Activated CD4-positive, alpha-beta T cell treated with anti-CD3 and anti-CD28 coated beads for 36 hours (primary cell): ENCODE measurements at regions of chr14 and their contacts with region 1.

Region 1: GRCh38 chr14:67359775-67360648 is at the starts of genes ATP6V1D and EIF2S1:
- DNase-seq: peak; percentile 100
- ATAC-seq: peak; percentile 95
- H3K4me3 Mint-ChIP-seq: peak within 1 kb of the TSS; percentile 98
- H3K27ac Mint-ChIP-seq: peak within 1 kb of the TSS; percentile 98
- H3K4me1 Mint-ChIP-seq: peaks cover 59% of the 10 kb centered on the region
- H3K27me3 Mint-ChIP-seq: no peaks in the 10 kb centered on the region
- total RNA-seq, gene ATP6V1D: 23.3 to 26.7 TPM
- total RNA-seq, gene EIF2S1: 212 to 233 TPM

Region 2: DNA sequence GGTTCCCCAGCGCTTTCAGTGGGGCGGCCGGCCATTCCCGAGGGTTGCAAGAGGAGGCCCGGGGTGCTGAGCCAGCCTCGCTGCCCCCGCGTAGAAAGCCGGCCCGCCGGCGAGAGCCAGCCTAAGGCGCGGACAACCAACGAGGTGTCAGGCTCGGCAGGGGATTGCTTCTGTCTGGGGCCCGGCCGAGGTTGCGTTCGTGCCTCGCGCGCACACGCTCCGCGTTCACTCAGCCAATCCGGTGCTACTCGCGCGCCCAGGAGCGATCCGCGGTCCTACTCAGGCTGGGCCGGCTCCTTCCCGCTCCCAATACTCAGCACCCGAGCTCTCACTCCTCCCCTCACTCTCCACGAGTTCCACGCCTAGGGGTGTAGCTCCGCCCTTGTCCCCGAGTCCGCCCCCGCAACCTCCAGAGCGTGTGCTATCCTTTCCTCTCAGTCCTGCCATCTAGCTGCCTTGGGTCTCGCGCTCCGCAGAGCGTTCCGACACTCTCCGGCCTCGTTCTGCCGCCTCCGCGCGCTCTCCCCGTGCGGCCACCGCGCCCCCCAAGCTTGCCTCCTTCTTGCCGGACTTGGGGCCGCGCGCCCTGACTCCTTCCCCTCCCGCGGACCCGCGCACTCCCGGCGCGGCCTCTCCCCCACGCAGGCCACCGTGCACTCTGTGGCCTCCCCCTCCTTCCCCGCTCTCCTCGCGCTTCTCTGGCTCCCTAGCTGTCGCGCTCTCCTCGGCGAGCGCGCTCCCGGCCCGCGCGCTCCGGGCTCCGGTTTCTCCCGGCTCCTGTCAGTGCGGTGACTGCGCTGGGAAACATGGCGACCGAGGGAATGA is 852.1 kb before region 1 on chr14 and contains the start of gene GPHN:
- CTCF ChIA-PET with region 1: interaction called, 8 read pairs
- POLR2A ChIA-PET with region 1: no interaction called
- intact Hi-C with region 1: loop called (anchors 1 kb)
- DNase-seq: peak; percentile 96
- ATAC-seq: peak; percentile 96
- H3K4me3 Mint-ChIP-seq: peak within 1 kb of the TSS; percentile 90
- H3K27ac Mint-ChIP-seq: peak within 1 kb of the TSS; percentile 94
- H3K4me1 Mint-ChIP-seq: peaks cover 39% of the 10 kb centered on the region
- H3K27me3 Mint-ChIP-seq: peaks cover 3% of the 10 kb centered on the region
- total RNA-seq, gene GPHN: 29.8 to 37.5 TPM

Region 3: GRCh38 chr14:67240978-67241414 is 119.0 kb before region 1 on chr14:
- CTCF ChIA-PET with region 1: interaction called, 5 read pairs
- POLR2A ChIA-PET with region 1: interaction called, 6 read pairs
- intact Hi-C with region 1: loop called (anchors 1 kb)
- DNase-seq: peak; percentile 97
- ATAC-seq: peak; percentile 95
- H3K4me3 Mint-ChIP-seq: peak overlapping the region; percentile 79
- H3K27ac Mint-ChIP-seq: peak overlapping the region; percentile 83
- H3K4me1 Mint-ChIP-seq: peaks cover 21% of the 10 kb centered on the region
- H3K27me3 Mint-ChIP-seq: peaks cover 8% of the 10 kb centered on the region

Region 4: GRCh38 chr14:67599698-67600561 is 239.9 kb after region 1 on chr14 and contains the start of gene PIGH:
- CTCF ChIA-PET with region 1: no interaction called
- POLR2A ChIA-PET with region 1: no interaction called
- intact Hi-C with region 1: loop called in 1 of 2 experiments (anchors 1 kb)
- DNase-seq: peak; percentile 97
- ATAC-seq: peak; percentile 99
- H3K4me3 Mint-ChIP-seq: peak within 1 kb of the TSS; percentile 94
- H3K27ac Mint-ChIP-seq: peak within 1 kb of the TSS; percentile 94
- H3K4me1 Mint-ChIP-seq: peaks cover 34% of the 10 kb centered on the region
- H3K27me3 Mint-ChIP-seq: no peaks in the 10 kb centered on the region
- total RNA-seq, gene PIGH: 14.9 to 21.4 TPM

Region 5: DNA sequence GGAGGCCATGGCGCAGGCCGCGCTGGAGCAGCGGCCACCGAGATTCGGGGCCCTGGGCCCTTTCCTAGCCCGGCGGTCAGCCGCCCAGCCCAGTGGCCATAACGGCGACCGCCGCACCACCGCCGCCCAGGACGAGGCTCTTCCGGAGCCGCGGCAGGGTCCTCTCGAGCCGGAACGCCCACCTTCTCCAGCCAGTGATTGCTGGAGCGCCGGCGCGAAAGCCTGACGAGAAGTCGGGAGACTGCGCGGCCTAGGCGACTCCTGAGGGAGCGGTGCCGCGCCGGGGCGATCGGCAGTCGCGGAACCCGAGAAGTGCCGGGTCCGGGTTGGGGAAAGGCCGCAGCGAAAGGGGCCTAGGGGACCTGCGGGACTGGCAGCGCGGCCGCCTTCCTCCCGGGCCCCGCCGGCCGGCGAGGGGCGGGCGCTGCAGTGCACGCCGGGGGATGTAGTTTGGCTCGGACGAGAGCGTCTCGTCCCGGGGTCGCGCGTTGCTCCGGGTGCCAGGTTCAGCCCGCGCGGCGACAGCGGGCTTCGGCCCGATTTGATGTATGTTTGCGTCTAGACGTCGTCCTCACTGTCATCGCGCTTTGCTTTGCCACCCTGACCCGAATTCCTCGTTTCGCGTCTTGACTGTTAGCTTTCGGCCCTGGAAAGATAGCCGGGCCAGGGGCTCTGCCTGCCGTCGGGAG is 314.6 kb after region 1 on chr14 and contains the start of gene VTI1B:
- CTCF ChIA-PET with region 1: no interaction called
- POLR2A ChIA-PET with region 1: no interaction called
- intact Hi-C with region 1: loop called (anchors 1 to 10 kb)
- DNase-seq: peak; percentile 83
- ATAC-seq: peak; percentile 94
- H3K4me3 Mint-ChIP-seq: peak within 1 kb of the TSS; percentile 81
- H3K27ac Mint-ChIP-seq: peak within 1 kb of the TSS; percentile 82
- H3K4me1 Mint-ChIP-seq: peaks cover 32% of the 10 kb centered on the region
- H3K27me3 Mint-ChIP-seq: no peaks in the 10 kb centered on the region
- total RNA-seq, gene VTI1B: 42.0 to 58.3 TPM

Region 6: GRCh38 chr14:67816326-67817002 is 456.5 kb after region 1 on chr14 and contains the start of gene ZFYVE26:
- CTCF ChIA-PET with region 1: no interaction called
- POLR2A ChIA-PET with region 1: interaction called, 4 read pairs
- intact Hi-C with region 1: loop called (anchors 1 kb)
- DNase-seq: peak; percentile 95
- ATAC-seq: peak; percentile 89
- H3K4me3 Mint-ChIP-seq: peak within 1 kb of the TSS; percentile 89
- H3K27ac Mint-ChIP-seq: peak within 1 kb of the TSS; percentile 92
- H3K4me1 Mint-ChIP-seq: peaks cover 45% of the 10 kb centered on the region
- H3K27me3 Mint-ChIP-seq: no peaks in the 10 kb centered on the region
- total RNA-seq, gene ZFYVE26: 13.0 to 14.2 TPM